PC-9 (cell line): ENCODE measurements at regions of chr6 and their contacts with region 1.

Region 1: DNA sequence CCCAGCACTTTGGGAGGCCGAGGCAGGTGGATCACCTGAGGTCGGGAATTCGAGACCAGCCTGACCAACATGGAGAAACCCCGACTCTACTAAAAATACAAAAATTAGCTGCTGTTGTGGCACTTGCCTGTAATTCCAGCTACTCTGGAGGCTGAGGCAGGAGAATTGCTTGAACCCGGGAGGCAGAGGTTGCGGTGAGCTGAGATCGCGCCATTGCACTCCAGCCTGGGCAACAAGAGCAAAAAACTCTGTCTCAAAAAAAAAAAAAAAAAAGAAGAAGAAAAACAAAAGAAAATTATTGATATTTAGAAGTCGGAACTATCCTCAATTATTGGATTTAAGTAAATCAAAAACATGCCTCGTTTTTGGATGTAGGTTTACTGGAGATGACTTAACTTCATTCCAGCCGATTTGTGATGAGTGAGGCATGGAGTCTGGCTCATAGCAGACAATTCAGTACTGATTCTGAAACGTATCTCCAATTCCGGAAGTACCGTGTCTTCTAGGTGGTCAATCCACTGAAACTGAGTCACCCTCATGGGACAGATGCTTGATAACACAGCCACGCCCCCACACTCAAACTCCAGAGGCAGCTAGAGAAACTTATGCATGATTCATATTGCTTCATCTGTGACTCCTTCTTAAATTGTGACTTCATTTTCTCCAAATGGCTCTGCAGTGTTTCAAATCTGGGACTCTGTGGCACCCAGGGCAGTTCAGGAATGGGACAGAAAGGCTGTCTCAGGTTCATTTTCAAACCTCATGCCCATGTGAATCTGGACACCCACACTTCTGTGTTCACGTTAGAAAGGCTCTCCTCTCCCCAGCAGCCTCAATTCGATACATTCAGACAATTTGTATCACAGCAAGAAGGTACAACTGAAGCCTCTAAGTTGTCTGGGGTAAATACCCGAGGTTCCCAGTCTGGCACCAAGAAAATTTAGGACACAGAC is 110.4 kb upstream of the ARMC2 start:
- DNase-seq: peak; percentile 84 to 99
- H3K4me3 ChIP-seq: peak overlapping the region; percentile 59
- H3K27ac ChIP-seq: peak overlapping the region; percentile 99
- H3K4me1 ChIP-seq: peaks cover 93% of the 10 kb centered on the region
- H3K27me3 ChIP-seq: no peaks in the 10 kb centered on the region
- CTCF ChIP-seq: no peak

Region 2: DNA sequence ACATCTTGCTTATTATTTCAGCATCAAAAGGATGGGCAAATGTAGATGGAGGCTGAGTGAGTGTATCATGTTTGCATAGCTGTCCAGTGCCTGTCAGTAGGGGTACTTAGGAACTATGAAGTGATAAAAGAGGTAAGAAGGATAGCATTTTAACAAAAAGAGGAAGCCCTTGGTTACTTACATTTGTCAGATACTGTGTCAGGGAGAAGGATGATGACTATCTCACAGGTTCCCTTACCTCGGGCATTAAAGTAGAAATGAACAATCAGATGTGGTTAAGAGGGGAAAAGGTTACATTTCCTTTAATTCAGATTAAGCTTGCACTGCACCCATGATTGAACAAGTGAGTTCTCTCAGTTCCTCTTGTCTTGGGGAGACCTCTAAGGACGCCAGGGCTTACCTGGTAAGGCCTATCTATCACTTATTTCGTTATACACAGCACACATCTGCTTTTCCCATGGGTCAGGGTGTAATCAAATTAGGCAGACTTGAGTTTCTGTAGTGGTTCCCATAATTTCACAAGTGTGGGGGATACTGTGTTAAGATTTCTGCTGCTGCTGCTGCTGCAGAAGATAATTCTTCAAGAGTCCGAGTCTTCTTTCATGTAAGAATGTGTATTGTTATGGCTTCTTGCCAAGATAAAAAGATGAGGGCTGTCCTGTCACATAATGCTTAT is 172.6 kb before region 1 on chr6:
- CTCF ChIA-PET with region 1: no interaction called
- POLR2A ChIA-PET with region 1: interaction called, 17 read pairs
- intact Hi-C with region 1: no loop called
- DNase-seq: peak in 1 of 2 experiments; percentile 67
- H3K4me3 ChIP-seq: peak overlapping the region; percentile 99
- H3K27ac ChIP-seq: peak overlapping the region; percentile 84
- H3K4me1 ChIP-seq: peaks cover 37% of the 10 kb centered on the region
- H3K27me3 ChIP-seq: no peaks in the 10 kb centered on the region
- CTCF ChIP-seq: no peak

Region 3: GRCh38 chr6:108895571-108895970 is 157.7 kb after region 1 on chr6:
- CTCF ChIA-PET with region 1: no interaction called
- POLR2A ChIA-PET with region 1: no interaction called
- intact Hi-C with region 1: no loop called
- DNase-seq: no peak
- H3K4me3 ChIP-seq: no peak overlapping the region
- H3K27ac ChIP-seq: peak overlapping the region; percentile 57
- H3K4me1 ChIP-seq: peaks cover 14% of the 10 kb centered on the region
- H3K27me3 ChIP-seq: no peaks in the 10 kb centered on the region
- CTCF ChIP-seq: no peak